ENCODE measurements at regions of chr5 and their contacts with region 1.

Region 1: DNA sequence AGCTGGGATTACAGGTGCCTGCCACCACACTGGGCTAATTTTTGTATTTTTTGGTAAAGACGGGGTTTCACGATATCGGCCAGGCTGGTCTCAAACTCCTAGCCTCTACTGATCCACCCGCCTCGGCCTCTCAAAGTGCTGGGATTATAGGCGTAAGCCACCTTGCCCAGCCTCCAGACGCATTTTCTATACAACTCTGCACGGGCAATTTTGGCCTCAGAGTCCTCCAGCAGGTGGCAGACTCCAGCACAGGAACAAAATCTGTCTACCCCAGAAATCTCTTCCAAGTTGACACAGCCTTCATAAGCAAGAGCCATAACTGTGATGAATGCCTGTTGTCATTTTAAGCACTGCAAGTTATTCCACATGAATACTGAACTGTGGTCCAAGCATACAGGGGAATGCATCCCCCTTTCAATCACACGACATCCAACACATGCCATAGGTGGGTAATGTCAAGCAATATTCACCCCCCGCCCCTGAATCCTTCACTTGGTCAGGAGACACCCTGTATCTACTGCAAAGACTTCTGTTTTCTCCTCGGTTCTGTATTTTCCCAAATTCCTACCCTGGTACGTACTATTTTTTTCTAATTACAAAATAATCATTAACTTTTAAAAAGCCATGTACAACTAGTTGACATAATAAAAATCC is 50.8 kb downstream of the ALDH7A1 start:
- DNase-seq: peak; percentile 44
- ATAC-seq: peak; percentile 64
- H3K4me3 ChIP-seq: no peak overlapping the region
- H3K27ac ChIP-seq: no peak overlapping the region
- H3K4me1 ChIP-seq: no peaks in the 10 kb centered on the region
- H3K27me3 ChIP-seq: no peaks in the 10 kb centered on the region
- CTCF ChIP-seq: peak; percentile 48
- POLR2A ChIP-seq: no peak
- RAD21 ChIP-seq: peak; percentile 36

Region 2: DNA sequence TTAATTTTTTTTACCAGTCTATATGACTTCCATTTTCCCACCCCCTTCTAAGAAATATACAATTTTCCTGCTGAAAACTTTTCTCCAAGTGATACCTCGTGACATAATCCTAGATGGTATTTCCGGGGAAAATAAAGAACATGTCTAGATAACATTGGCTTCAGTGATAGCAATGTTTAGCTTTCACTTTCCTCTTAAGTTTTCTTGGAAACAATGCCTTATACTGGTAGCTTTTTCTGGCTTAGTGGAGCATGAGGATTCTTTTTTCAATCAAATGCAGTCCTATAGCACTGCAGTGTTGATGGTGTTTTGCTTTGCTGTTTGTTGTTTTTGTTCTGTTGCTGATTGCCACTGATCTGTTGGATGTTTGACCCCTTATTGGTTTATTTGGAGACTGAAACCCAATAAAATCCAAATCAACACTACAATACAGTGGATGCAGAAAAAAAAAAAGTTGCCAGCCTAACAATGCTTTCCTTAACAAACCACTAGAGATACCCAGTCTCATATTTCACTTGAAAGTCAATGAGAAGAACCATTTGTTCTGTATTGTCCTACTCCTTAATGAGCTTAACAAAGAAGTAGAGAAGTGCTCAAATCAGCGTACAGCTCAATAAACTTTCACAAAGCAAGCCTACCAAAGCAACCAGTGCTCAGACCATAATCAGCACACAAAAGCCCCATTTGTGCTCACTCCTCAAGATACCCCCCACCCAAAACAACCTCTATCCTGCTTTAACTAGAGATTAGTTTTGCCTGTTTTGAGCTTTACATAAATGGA is 195.2 kb before region 1 on chr5:
- CTCF ChIA-PET with region 1: interaction called, 13 read pairs
- POLR2A ChIA-PET with region 1: no interaction called
- dilution Hi-C with region 1: loop called (anchors 10 kb)
- in situ Hi-C with region 1: loop called (anchors 5 kb)
- intact Hi-C with region 1: loop called (anchors 1 kb)
- DNase-seq: peak; percentile 54
- ATAC-seq: peak; percentile 76
- H3K4me3 ChIP-seq: no peak overlapping the region
- H3K27ac ChIP-seq: no peak overlapping the region
- H3K4me1 ChIP-seq: peaks cover 13% of the 10 kb centered on the region
- H3K27me3 ChIP-seq: no peaks in the 10 kb centered on the region
- CTCF ChIP-seq: no peak
- POLR2A ChIP-seq: no peak
- RAD21 ChIP-seq: no peak

Measured in IMR-90 (cell line).